ENCODE measurements at regions of chr22 and their contacts with region 1.

Region 1: DNA sequence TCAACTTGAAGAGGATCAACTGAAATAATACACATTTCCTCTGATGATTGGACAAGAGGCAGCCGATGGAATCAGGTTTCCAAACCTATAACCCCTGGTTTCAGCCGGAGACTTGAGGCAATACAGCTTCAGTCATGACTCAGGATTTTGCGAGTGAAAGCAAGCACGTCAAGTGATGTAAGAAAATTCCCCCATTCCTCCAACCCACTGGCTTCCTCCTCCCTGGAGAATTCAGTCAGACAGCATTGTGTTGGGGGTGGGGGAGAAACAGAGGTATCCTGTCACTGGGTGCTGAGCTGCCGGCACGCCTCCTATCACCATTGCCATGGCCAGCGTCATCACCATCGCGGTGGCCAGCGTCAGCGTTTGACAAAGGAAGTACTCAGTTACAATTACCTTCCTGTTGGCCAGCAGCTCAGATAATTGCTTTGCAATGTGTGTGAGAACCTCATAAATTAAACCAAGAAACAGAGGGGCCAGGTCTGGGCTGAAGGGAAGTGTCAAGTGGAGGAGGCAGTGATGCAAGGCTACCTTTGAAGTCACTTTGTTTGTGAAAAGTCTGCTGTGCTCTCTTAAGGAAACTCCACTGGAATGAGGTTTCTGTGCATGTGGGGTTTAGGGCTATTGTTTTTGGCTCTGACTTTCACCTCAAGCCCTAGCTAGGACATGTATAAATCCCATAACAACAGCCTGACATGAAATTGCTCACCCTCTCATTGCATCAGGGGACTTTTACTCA is 50.2 kb downstream of the LIF start:
- DNase-seq: peak; percentile 83
- H3K4me3 Mint-ChIP-seq: peak overlapping the region; percentile 73
- H3K27ac Mint-ChIP-seq: peak overlapping the region; percentile 96
- H3K4me1 Mint-ChIP-seq: peaks cover 70% of the 10 kb centered on the region
- H3K27me3 Mint-ChIP-seq: no peaks in the 10 kb centered on the region

Region 2: DNA sequence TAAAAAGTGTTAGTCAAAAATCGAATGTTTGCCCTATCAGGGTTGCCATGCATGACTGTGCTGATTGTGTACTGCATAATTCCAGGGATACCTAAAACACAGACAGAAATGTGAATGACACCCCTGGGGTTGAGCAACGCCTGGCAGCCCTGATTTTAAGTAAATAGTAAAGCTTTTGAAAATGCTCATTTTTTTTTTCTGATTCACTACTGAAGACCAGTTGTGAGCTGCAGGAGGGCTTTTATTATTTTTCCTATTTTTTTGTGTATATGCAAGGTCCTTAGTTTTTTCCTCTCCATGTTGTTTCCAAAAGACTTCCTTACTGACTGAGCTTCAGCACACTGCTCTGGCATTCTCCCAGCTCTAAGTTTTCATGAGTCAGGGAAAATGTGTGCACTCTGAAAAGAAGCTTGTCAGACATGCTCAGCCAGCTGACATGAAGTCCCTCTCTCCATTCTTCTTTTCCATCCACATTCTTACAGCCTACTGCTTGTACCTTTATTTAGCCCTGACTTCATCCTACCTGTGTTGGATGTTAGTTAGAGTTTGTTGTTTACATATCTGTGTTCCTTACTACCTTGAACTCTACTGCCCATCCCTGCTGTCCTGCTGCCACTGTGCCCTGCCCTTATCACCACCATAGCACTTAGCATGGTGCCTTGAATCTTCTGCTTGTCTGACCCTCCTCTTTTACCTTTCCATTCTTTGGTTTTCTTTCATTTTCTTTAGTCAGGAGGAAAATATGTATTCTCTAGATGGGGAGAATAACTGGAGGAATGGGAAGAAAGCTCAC is 36.6 kb before region 1 on chr22:
- intact Hi-C with region 1: loop called (anchors 5 kb)
- DNase-seq: no peak
- H3K4me3 Mint-ChIP-seq: peak overlapping the region; percentile 37
- H3K27ac Mint-ChIP-seq: peak overlapping the region; percentile 96
- H3K4me1 Mint-ChIP-seq: peaks cover 53% of the 10 kb centered on the region
- H3K27me3 Mint-ChIP-seq: no peaks in the 10 kb centered on the region

Region 3: GRCh38 chr22:30178181-30179126 is 17.9 kb before region 1 on chr22:
- intact Hi-C with region 1: loop called (anchors 2 kb)
- DNase-seq: peak; percentile 85
- H3K4me3 Mint-ChIP-seq: peak overlapping the region; percentile 44
- H3K27ac Mint-ChIP-seq: peak overlapping the region; percentile 97
- H3K4me1 Mint-ChIP-seq: peaks cover 67% of the 10 kb centered on the region
- H3K27me3 Mint-ChIP-seq: no peaks in the 10 kb centered on the region

Region 4: GRCh38 chr22:30212363-30212995 is 16.2 kb after region 1 on chr22:
- intact Hi-C with region 1: loop called (anchors 2 kb)
- DNase-seq: peak; percentile 69
- H3K4me3 Mint-ChIP-seq: peak overlapping the region; percentile 42
- H3K27ac Mint-ChIP-seq: peak overlapping the region; percentile 87
- H3K4me1 Mint-ChIP-seq: peaks cover 45% of the 10 kb centered on the region
- H3K27me3 Mint-ChIP-seq: no peaks in the 10 kb centered on the region